ENCODE measurements at regions of chr6 and their contacts with region 1.

Region 1: DNA sequence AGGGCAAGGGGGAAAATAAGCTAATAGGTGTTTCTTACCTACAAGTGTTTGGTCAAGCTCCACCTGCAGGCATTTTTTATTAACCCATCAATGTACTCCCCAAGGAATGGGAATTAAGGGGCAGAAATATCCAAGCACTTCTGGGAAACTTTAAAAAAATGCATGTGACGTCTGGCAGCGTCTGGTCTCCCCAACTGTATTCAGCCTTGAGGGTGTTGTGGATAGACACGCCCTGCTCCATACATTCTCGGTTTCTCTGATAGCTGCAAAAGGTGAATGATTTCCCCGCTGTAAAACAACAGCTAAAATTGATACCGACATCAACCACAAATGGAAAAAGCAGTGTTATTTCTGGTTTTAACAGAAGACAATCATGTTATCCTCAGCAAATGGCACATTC is 2.5 kb upstream of the FOXQ1 start:
- DNase-seq: no peak
- H3K4me3 ChIP-seq: no peak overlapping the region
- H3K27ac ChIP-seq: no peak overlapping the region
- H3K4me1 ChIP-seq: peaks cover 9% of the 10 kb centered on the region
- H3K27me3 ChIP-seq: peaks cover 89% of the 10 kb centered on the region
- CTCF ChIP-seq: no peak

Region 2: DNA sequence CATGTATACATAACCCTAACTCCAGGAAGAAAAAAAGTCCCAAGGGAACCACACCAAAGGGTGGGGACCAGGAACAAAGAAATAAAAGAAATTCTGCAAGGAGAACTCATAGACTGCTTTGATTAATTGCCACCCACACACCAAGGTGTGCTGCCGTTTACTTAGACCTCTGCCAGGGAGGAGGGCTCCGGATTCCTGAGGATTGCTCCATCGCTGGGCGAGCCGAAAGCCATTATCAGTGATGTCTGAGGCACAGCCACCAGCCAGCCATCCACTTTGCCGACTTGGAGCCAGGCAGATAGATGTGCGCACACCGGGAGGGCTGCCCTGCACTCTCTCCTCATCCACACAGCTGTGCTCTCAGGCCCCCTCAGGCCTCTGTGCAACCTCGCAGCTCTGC is 270.2 kb before region 1 on chr6:
- CTCF ChIA-PET with region 1: no interaction called
- POLR2A ChIA-PET with region 1: no interaction called
- intact Hi-C with region 1: loop called (anchors 10 kb)
- DNase-seq: no peak
- H3K4me3 ChIP-seq: no peak overlapping the region
- H3K27ac ChIP-seq: no peak overlapping the region
- H3K4me1 ChIP-seq: no peaks in the 10 kb centered on the region
- H3K27me3 ChIP-seq: peaks cover 100% of the 10 kb centered on the region
- CTCF ChIP-seq: no peak

Region 3: DNA sequence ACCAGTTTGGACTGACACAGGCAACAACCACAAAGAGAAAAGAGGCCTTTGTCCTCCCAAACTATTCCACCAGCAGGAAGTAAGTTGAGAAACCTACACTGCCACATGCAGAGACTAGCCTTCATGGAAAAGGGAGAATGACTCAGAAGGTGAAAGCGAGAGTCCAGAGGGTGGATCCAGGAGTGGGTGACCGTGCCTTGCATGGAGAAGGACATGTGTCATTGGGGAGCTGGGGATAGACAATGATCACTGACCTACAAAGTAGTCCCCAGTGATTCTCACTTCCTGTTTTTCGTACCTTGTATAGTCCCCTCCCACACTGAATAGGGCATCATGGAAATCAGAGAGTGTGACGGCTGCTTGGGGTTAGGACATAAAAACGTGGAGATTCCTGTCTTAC is 1349.4 kb after region 1 on chr6:
- CTCF ChIA-PET with region 1: no interaction called
- POLR2A ChIA-PET with region 1: no interaction called
- intact Hi-C with region 1: no loop called
- DNase-seq: no peak
- H3K4me3 ChIP-seq: no peak overlapping the region
- H3K27ac ChIP-seq: no peak overlapping the region
- H3K4me1 ChIP-seq: no peaks in the 10 kb centered on the region
- H3K27me3 ChIP-seq: no peaks in the 10 kb centered on the region
- CTCF ChIP-seq: no peak